AG04450 (cell line): ENCODE measurements at regions of chr12 and their contacts with region 1.

Region 1: GRCh38 chr12:65217086-65217485 is 47.7 kb downstream of the LEMD3 start:
- DNase-seq: no peak
- H3K4me3 ChIP-seq: no peak overlapping the region
- H3K27ac ChIP-seq: no peak overlapping the region
- H3K27me3 ChIP-seq: no peaks in the 10 kb centered on the region
- CTCF ChIP-seq: no peak

Region 2: DNA sequence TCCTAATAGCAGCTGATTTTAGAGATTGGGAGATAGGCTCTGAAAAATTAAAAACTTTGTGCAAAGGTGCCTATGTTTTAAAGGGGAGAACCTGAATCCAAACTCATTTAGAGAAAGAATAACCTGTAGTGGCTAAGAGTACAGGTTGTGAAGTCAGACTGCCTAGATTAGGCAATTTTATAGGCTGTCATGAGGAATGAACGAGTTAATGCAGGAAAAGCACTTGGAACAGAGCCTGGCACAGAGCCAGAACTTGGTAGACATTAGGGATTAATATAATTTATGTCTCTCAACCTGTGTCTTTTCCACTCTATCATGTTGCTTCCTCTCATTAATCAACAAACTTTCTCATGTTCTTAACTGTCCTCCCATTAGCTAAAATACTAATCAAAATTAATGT is 194.1 kb before region 1 on chr12:
- CTCF ChIA-PET with region 1: interaction called, 10 read pairs
- POLR2A ChIA-PET with region 1: no interaction called
- DNase-seq: no peak
- H3K4me3 ChIP-seq: no peak overlapping the region
- H3K27ac ChIP-seq: no peak overlapping the region
- H3K27me3 ChIP-seq: peaks cover 5% of the 10 kb centered on the region
- CTCF ChIP-seq: no peak